Tibial artery (tissue), 4 donors: ENCODE measurements at regions of chr2 and their contacts with region 1.

Region 1: DNA sequence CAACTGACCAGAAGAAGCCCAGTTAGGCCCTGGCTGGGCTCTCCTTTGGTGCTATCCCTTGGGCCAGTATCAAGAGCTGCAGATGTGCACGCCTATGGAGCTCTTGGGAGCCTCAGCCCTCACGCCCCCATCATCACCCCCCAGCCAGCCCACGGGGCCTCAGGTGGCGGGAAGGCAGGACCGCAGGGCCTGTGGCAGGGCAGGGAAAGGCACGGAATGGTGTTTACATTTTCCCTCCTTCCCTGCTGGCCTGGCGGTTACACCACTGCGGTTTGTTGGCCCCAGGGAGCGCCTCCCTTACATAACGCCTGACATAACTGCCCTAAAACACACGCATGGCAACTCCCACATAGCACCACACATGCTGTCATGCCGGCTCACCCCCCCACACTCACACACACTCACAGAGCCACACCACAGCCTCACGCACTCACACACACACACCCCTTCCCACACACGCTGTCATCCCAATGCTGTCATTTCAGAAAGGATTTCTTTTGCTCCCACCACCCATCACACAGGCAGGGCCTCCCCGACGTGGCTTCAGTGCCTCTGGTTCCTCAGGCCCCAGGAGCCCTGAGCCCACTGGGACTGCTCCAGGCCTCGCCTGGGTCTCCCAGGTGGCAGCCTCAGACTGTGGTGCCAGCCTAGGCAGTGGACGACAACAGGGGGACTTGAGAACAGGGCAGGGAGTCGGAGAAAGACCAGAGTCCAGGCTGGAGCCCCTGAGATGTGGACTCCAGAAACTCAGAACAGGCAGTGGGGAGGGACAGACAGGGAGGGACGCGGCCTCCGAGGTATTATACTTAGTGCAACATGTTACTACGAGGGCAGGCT is 15.7 kb downstream of the ZFP36L2 start:
- DNase-seq: peak; percentile 67 to 75
- H3K4me3 ChIP-seq: no peak overlapping the region
- H3K27ac ChIP-seq: peak overlapping the region in 1 of 2 donors; percentile 35
- H3K4me1 ChIP-seq: peaks cover 0 to 15% (median 4%) of the 10 kb centered on the region in 4 donors
- H3K27me3 ChIP-seq: no peaks in the 10 kb centered on the region
- CTCF ChIP-seq: no peak

Region 2: DNA sequence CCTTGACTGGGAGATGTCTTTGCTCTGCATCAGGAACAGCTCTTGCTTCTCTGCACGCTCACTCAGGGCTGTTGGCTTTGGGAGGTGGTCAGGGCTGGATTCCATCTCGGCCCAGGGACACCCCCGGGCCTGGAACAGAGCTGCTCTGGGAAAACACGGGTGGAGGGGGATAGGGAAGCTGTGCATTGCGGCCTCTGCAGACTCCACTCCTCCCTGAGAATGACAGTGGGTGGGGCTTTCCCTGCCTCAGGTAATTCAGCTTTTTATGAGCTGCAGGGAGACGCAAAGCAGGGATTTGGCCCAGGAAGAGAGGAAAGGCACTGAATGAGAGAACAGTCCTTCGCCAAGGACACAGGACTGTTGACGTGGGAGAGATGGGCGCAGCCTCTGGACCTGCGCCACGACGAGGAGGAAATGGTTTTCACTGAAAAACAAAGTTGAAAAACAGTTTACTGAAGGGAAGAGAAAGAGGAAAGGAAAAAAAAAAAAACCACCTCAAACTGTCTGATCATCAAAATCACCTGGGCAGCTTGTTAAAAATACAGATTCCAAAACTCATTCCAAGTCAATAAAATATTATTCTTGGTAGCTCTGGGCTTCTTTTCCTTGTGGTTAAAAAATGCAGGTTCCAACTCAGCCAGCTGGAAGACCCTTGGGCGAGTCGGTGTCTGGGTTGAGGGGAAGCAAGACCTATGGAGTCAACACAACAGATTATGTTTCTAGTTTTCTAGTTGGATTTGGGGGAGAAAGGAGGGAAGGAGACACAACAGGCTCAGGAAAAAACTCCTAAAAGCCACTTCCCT is 178.3 kb before region 1 on chr2:
- intact Hi-C with region 1: loop called (anchors 5 kb)
- DNase-seq: peak; percentile 50 to 72
- H3K4me3 ChIP-seq: no peak overlapping the region
- H3K27ac ChIP-seq: peak overlapping the region; percentile 28 to 55
- H3K4me1 ChIP-seq: peaks cover 0 to 16% (median 10%) of the 10 kb centered on the region in 4 donors
- H3K27me3 ChIP-seq: no peaks in the 10 kb centered on the region
- CTCF ChIP-seq: no peak

Region 3: DNA sequence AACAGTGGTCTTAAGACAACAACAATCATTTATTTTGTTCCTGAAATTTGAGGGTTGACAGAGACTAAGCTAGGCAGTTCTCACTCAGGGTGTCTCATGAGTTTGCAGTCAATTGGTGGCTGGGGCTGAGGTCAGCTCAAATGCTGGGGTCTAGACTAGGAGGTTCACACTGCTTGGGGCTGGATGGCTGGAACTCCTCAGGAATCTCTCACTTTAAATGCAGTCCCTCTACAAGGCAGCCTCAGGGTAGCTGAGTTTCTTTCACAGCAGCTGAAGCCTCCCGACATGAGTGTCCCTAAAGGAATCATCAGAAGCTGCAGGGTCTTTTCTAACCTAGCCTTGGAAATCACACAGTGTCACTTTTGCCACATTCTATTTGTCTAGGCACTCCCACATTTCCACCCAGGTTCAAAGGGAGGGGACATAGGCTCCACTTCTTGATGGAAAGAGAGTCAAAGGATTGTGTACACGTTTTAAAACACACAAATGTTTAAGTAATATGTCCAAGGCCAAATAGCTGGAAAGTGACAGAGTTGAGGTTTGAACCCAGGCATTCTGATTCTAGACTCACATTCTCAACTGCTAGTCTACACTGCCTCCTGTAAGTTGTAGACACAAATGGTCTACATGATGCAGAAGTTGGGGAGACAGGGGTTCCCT is 118.0 kb before region 1 on chr2:
- intact Hi-C with region 1: loop called (anchors 5 kb)
- DNase-seq: peak in 1 of 2 donors; percentile 28
- H3K4me3 ChIP-seq: no peak overlapping the region
- H3K27ac ChIP-seq: no peak overlapping the region
- H3K4me1 ChIP-seq: peaks cover 0 to 5% (median 2%) of the 10 kb centered on the region in 4 donors
- H3K27me3 ChIP-seq: no peaks in the 10 kb centered on the region
- CTCF ChIP-seq: no peak